ENCODE measurements at regions of chr22 and their contacts with region 1.

Region 1: DNA sequence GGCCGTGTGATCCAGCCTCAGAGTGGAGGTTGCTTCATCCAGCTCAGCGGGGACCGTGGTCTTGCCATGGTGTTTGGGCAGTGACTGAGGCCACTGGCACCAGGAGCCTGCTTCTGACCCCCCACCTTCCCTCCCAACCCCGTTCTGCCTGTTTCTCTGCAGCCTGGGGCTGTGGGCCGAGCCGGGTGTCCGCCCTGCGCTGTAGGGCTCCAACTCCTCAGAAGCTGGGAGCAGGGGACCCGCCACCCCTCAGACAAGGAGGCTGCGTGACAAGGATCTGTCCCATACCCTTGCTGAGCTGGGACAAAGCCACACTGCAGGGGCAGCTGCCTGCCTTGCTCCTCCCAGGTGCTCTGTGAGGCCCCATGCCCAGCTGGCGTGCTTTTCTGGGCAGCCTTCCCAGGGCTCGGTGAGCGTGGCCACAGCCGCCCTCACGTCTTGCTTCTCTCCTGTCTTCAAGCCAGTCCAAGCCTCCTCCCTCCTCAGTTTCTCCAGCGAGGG is 11.7 kb upstream of the ARFGAP3 start:
- DNase-seq: no peak
- H3K4me3 Mint-ChIP-seq: no peak overlapping the region
- H3K27ac Mint-ChIP-seq: no peak overlapping the region
- H3K4me1 Mint-ChIP-seq: peaks cover 20% of the 10 kb centered on the region
- H3K27me3 Mint-ChIP-seq: no peaks in the 10 kb centered on the region
- CTCF ChIP-seq: no peak

Region 2: GRCh38 chr22:42811459-42811858 is 57.3 kb before region 1 on chr22:
- CTCF ChIA-PET with region 1: no interaction called
- intact Hi-C with region 1: no loop called
- DNase-seq: no peak
- H3K4me3 Mint-ChIP-seq: no peak overlapping the region
- H3K27ac Mint-ChIP-seq: no peak overlapping the region
- H3K4me1 Mint-ChIP-seq: peaks cover under 1% of the 10 kb centered on the region
- H3K27me3 Mint-ChIP-seq: no peaks in the 10 kb centered on the region
- CTCF ChIP-seq: no peak

Region 3: DNA sequence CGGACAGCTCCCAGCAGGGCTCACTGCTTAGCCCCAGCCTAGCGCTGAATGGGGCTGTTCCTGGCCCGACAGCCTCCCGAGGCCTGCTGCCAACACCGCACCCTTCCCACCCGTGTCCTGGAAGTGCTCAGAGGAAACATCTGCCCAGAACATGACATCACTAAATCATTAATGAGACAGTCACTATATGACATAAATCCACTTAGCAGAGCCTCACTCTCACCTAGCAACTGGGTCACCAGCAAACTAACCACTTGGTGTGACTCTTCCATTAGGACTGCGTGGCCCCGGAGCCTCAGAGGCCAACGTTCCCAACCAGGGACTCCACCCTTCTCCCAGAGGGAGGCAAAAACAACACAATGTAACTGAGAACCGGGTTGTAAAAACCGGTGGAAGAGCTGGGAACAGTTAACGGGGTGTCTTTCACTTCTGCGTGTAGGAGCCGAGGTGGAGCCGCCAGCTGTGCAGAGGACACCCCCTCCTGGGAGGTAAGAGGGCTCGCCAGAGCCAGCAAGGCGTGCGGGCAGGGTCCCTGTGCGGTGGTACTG is 167.6 kb after region 1 on chr22:
- CTCF ChIA-PET with region 1: interaction called, 14 read pairs
- intact Hi-C with region 1: no loop called
- DNase-seq: no peak
- H3K4me3 Mint-ChIP-seq: no peak overlapping the region
- H3K27ac Mint-ChIP-seq: no peak overlapping the region
- H3K4me1 Mint-ChIP-seq: no peaks in the 10 kb centered on the region
- H3K27me3 Mint-ChIP-seq: no peaks in the 10 kb centered on the region
- CTCF ChIP-seq: no peak